GM10248 (cell line): ENCODE measurements at regions of chr15 and their contacts with region 1.

Region 1: GRCh38 chr15:67685008-67685599 is 140.2 kb upstream of the SKOR1 start:
- DNase-seq: no peak
- CTCF ChIP-seq: no peak

Region 2: DNA sequence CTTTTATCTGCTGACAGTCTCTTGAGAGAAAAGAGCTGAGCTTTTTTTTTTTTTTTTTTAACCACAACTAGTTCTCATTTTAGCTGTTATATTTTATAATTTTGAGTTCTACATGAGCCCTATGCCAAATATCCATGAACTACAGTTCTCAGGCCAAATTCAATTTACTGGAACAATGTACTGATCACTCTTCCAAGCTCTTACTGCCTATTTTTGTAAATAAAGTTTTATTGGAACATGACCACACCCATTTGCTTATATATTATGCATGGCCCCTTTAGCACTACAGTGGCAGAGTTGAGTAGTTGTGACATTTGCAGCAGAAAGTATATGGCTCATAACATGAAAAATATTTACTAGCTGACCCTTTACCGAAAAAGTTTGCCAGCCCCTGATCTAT is 11.0 kb after region 1 on chr15:
- CTCF ChIA-PET with region 1: interaction called, 11 read pairs
- POLR2A ChIA-PET with region 1: no interaction called
- DNase-seq: no peak
- CTCF ChIP-seq: no peak